ENCODE measurements at regions of chr2 and their contacts with region 1.

Region 1: DNA sequence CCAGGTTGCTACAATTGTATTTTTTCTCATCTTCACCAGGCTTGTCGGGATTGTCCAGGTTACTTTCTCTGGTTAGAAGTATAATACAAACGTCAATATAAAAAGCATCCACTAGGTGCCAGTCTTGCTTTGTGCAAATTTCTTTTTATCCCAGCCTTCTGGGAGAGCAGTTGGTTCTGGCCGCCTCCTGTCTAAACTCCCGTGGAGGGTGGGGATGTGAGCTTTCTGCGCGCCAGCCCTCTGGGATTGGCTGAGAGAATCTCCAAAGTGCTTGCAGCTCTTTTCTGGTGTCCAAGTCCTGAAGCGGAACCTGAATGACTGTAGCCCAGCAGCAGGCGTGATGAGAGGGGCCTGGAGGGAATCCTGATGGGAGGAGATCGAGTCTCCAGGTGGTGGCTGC is 22.4 kb upstream of the TOGARAM2 start:
- DNase-seq: peak; percentile 73
- ATAC-seq: peak; percentile 87 to 89

Region 2: GRCh38 chr2:29014811-29015421 is 56.2 kb after region 1 on chr2:
- intact Hi-C with region 1: loop called in 1 of 2 experiments (anchors 5 kb)
- DNase-seq: peak; percentile 74
- ATAC-seq: peak; percentile 31 to 50

Region 3: DNA sequence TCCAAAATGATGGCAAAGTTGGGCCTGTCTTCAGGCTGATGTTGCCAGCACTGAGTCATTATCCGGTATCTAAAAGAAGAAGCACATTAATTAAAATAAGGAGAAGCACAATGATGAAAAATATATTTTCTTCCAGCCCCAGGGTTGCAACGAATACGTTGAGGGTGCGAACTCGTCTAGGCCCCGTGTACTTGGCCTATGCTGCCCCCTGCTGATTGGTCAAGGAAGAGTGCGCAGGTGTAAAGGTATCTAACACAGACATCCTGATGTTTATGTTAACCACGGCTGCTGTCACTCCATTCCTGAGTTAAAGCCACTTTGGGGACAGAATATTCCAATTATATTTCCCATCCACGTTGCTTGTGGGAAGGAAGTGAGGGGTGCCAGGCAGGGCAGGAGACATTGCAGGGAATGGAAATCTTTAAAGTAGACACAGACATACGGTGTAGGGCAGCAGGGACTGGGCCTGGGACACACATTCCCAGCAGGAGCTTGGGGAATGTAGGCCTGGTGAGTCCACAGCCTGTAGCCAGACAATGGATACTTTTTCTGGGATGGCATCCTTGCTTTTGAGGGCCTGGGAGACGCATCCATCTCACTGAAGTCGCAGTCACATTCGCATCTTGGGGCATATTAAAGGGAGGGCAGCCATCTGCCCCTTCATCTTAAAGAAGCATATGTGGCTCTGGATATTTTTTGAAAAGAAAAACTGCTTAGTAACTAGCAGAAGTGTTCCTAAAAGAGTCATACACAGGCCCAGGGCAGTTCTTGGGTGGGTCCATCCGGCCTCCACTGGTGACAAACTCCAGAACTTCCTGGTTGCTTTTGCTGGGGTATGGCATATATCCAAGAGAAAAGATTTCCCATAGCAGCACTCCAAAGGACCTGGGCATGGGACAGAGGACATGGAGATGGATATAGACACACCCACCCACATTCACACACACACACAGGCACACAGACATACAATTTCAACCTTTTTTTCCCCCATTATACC is 238.4 kb after region 1 on chr2:
- intact Hi-C with region 1: loop called (anchors 2 to 5 kb)
- DNase-seq: peak; percentile 62
- ATAC-seq: peak; percentile 83 to 88

Region 4: GRCh38 chr2:29841386-29842004 is 882.8 kb after region 1 on chr2:
- intact Hi-C with region 1: loop called (anchors 5 to 10 kb)
- DNase-seq: no peak
- ATAC-seq: peak in 1 of 2 donors; percentile 57

Region 5: GRCh38 chr2:30026087-30027055 is 1067.7 kb after region 1 on chr2:
- intact Hi-C with region 1: loop called in 1 of 2 experiments (anchors 10 kb)
- DNase-seq: peak; percentile 45
- ATAC-seq: peak; percentile 79 to 82